Activated naive CD4-positive, alpha-beta T cell treated with anti-CD3 and anti-CD28 coated beads for 36 hours (primary cell): ENCODE measurements at regions of chr2 and their contacts with region 1.

Region 1: DNA sequence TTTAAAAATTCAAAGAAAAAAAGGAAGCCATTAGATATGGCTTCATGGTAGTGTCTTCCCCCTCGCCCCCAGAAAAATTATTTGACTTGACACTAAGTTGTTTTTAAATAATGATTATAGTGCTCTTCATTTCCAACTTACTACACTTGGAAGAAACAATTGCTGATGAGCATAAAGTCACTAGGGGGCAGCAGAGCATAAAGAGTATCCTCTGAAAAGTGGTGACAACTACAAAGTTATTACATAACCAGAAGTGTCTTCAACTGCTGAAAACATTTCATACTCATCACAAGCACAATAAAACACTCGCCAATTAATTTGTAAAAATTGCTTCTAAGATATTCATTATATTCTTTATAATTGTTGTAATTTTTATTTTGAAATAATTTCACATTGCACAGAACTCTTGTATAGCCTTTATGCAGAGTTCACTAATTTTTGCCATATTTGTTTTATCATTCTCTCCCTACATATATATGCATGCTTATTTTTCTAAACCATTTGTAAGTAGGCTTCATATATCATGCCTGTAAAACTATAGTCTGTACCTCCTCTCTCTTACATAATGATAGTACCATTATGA is 54.9 kb downstream of the EXOC6B start:
- DNase-seq: peak; percentile 78
- H3K4me3 Mint-ChIP-seq: no peak overlapping the region
- H3K27ac Mint-ChIP-seq: no peak overlapping the region
- H3K4me1 Mint-ChIP-seq: no peaks in the 10 kb centered on the region
- H3K27me3 Mint-ChIP-seq: no peaks in the 10 kb centered on the region

Region 2: GRCh38 chr2:71905205-71905604 is 865.8 kb before region 1 on chr2:
- CTCF ChIA-PET with region 1: no interaction called
- intact Hi-C with region 1: no loop called
- DNase-seq: no peak
- H3K4me3 Mint-ChIP-seq: no peak overlapping the region
- H3K27ac Mint-ChIP-seq: no peak overlapping the region
- H3K4me1 Mint-ChIP-seq: no peaks in the 10 kb centered on the region
- H3K27me3 Mint-ChIP-seq: peaks cover 16% of the 10 kb centered on the region

Region 3: DNA sequence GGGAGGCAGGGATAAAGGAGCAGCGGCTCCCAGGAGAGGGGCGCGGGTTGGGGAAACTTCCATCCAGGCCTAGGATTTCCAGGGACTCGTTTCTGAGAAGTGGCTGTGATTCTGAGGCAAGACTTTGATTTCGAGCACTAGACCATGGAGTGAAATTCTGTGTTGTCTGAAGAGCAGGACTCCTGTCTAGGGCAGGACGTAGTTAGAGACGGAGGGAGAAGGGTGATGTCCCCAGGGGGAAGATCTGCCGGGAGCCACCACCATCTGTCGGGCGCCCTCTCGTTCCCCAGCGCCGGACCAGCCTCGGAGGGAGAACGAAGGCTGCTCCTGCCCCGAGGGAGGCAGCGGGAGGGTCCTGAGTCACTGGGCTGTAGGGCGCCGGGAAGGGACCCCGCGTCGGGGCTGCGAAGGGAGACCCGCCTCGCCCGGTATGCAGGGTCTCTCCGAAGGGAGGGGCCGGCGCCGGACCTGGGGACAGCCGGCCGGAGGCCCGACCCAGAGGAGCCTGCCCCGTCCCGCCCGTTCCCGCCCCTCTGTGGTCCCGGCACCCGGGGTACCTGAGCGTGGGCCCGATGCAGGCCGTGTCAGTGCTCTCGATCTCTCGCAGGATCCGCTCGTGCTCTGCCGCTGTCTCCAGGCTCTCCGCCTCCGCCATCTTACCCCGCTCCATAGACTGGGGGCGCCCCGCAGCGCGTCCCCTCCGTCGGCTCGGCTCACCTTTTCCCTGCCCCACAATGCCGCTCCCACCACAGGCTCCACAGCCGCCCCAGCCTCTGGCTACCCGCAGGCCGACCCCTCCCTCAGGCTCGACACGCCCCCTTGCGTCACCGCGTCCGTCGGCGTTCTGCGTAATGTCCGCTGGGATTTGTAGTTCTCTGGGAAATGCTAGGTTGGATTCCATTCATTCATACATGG is 54.5 kb after region 1 on chr2 and contains the start of gene EXOC6B:
- CTCF ChIA-PET with region 1: interaction called, 3 read pairs
- intact Hi-C with region 1: loop called (anchors 2 kb)
- DNase-seq: peak; percentile 88
- H3K4me3 Mint-ChIP-seq: peak within 1 kb of the TSS; percentile 94
- H3K27ac Mint-ChIP-seq: no peak within 1 kb of the TSS
- H3K4me1 Mint-ChIP-seq: peaks cover 39% of the 10 kb centered on the region
- H3K27me3 Mint-ChIP-seq: peaks cover 2% of the 10 kb centered on the region
- total RNA-seq, gene EXOC6B: 6.1 to 7.5 TPM

Region 4: DNA sequence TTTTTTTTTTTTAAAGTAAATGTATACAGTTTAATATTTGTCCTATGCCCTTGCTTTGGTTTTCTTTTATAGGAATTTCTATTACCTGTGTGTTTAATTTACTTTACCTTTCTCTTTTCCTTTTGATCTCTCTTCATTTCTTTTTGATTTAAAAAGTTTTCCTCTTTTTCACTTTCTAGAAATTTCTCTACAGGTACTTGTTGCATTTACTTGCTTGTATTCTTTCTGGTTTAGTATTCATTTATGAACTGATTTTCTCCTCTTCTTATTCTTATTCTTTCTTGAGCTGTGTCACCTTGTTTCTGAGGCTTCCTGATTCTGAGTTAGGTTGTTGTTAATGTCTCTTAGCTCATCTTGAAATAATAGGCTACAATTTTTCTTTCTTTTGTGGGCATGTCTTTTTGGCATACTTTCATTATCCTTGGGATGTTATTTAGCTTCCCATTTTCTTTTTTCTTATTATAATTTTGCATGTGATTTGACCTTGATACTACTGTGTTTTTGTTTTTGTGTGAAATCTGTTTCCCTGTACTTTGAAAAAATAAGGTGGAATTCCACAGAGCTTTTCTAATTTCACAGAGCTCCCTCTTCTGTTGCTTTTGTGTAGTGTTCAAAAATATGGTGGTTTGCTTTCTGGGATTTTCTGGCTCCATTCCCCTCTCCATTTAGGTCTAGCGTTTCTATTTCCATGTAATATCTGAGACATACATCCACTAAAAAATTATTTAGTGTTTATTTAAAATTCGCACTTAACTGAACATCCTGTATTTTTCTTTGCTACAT is 589.1 kb after region 1 on chr2:
- CTCF ChIA-PET with region 1: no interaction called
- intact Hi-C with region 1: no loop called
- DNase-seq: no peak
- H3K4me3 Mint-ChIP-seq: no peak overlapping the region
- H3K27ac Mint-ChIP-seq: no peak overlapping the region
- H3K4me1 Mint-ChIP-seq: no peaks in the 10 kb centered on the region
- H3K27me3 Mint-ChIP-seq: no peaks in the 10 kb centered on the region